ENCODE measurements at regions of chr15 and their contacts with region 1.

Region 1: DNA sequence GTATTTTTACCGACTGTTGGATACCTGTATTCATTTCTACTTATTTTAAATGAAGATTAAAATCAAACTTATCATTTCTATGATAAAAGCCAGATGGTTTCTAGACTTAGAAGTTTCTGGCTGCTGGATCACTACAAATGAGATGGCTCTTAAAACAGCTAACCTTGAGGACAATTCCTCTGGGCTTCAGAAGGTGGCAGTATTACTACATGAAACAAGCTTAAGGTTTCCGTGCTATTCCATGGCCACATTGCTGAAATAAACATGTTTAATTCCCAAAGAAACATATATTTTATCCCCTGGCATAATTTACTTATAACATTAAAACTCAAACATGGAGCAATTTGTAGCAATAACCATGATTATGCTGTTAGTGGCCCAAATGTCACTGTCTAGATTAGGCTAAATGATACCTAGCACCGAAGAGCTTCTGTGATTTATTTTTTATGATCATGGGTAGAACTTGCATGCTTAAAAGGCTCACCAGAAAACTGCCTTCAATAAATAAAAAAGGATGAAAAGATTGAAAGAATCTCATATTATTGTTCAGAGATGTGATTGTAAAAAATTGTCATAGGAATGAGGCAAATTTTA is 204.0 kb upstream of the NANOGP8 start:
- DNase-seq: peak; percentile 71
- H3K4me3 ChIP-seq: no peak overlapping the region
- H3K27ac ChIP-seq: no peak overlapping the region
- H3K4me1 ChIP-seq: peaks cover 12% of the 10 kb centered on the region
- H3K27me3 ChIP-seq: peaks cover 18 to 51% of the 10 kb centered on the region in 2 experiments
- CTCF ChIP-seq: peak; percentile 59 to 63
- POLR2A ChIP-seq: no peak

Region 2: GRCh38 chr15:33808720-33809457 is 1480.2 kb before region 1 on chr15:
- CTCF ChIA-PET with region 1: no interaction called
- POLR2A ChIA-PET with region 1: no interaction called
- dilution Hi-C with region 1: no loop called
- intact Hi-C with region 1: no loop called
- DNase-seq: no peak
- H3K4me3 ChIP-seq: no peak overlapping the region
- H3K27ac ChIP-seq: no peak overlapping the region
- H3K4me1 ChIP-seq: no peaks in the 10 kb centered on the region
- H3K27me3 ChIP-seq: no peaks in the 10 kb centered on the region
- CTCF ChIP-seq: no peak
- POLR2A ChIP-seq: no peak

Region 3: GRCh38 chr15:35141743-35142471 is 147.2 kb before region 1 on chr15:
- CTCF ChIA-PET with region 1: no interaction called
- POLR2A ChIA-PET with region 1: no interaction called
- dilution Hi-C with region 1: no loop called
- intact Hi-C with region 1: no loop called
- DNase-seq: no peak
- H3K4me3 ChIP-seq: no peak overlapping the region
- H3K27ac ChIP-seq: no peak overlapping the region
- H3K4me1 ChIP-seq: no peaks in the 10 kb centered on the region
- H3K27me3 ChIP-seq: peaks cover 0 to 2% of the 10 kb centered on the region in 2 experiments
- CTCF ChIP-seq: no peak
- POLR2A ChIP-seq: no peak

Region 4: DNA sequence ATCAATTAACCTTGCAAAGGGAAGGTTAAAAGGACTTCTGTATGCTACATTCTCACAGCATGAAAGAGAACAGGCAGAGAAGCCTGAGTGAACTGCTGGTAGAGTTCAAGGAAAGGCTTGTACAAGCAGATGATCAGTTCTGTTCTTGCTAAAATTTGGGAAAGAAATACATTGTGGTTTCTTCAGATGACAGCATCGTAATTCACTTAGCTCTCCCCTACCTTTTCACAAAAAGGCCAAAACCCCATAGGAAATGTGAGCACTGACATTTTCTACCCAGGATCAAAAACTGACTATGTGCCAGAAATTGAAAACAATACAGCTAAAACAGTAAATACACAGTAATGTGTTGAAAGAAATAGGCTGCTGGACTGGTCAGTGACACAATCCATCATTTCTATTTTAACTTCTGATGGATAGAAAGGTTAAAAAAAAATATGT is 40.4 kb after region 1 on chr15:
- CTCF ChIA-PET with region 1: interaction called, 10 read pairs
- POLR2A ChIA-PET with region 1: no interaction called
- dilution Hi-C with region 1: no loop called
- intact Hi-C with region 1: no loop called
- DNase-seq: peak; percentile 69
- H3K4me3 ChIP-seq: no peak overlapping the region
- H3K27ac ChIP-seq: no peak overlapping the region
- H3K4me1 ChIP-seq: peaks cover 11% of the 10 kb centered on the region
- H3K27me3 ChIP-seq: no peaks in the 10 kb centered on the region
- CTCF ChIP-seq: no peak
- POLR2A ChIP-seq: no peak

Region 5: DNA sequence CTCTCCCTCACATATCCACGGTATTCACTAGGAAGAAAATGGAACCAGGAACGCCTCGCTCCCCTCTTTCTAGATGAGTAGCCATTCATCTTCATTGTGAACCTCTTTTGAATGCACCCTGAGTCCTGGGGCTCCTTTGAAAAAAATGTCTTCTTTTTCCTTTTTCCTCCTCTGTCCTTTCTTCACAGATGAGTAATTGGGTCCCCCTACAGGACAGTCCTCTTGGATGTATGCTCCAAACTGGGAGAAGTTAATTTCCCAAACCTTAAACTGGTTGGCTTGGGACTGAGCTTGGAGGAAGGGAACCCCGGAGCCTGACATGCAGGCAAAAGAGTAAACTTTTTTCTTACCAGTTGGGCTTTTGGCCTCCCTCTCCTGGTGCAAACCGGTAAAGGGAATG is 148.0 kb after region 1 on chr15:
- CTCF ChIA-PET with region 1: interaction called, 828 read pairs
- POLR2A ChIA-PET with region 1: no interaction called
- dilution Hi-C with region 1: no loop called
- intact Hi-C with region 1: loop called (anchors 1 kb)
- DNase-seq: peak; percentile 16
- H3K4me3 ChIP-seq: no peak overlapping the region
- H3K27ac ChIP-seq: no peak overlapping the region
- H3K4me1 ChIP-seq: no peaks in the 10 kb centered on the region
- H3K27me3 ChIP-seq: no peaks in the 10 kb centered on the region
- CTCF ChIP-seq: peak in 1 of 2 donors; percentile 13
- POLR2A ChIP-seq: no peak

Region 6: DNA sequence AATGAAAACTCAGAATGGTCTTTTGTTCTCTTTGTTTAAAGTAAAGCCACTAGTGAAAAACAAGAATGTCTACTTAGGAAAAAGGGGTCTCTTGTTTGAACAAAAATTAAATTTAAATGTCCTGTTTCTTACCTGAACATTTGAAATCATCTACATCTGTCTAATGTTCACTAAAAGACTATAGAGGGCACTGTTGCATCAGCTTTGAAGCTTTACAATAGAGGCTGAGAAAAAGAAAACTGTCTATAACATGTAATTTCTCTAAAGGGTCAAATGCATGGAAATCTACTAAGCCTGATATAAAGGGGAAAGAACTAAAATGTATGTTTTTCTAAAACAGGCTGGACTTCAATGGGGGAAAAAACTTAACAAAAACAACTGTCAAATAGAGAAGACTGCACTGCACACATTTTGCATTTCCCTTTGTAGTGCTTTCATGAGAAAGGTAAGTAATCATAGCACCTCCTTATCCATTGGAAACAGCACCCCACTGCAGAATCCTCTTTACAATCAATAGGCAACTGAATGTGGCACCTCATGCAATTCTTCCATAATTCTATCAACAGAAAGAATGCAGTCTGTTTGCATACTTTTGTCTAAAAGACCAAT is 230.5 kb after region 1 on chr15:
- CTCF ChIA-PET with region 1: interaction called, 34 read pairs
- POLR2A ChIA-PET with region 1: no interaction called
- dilution Hi-C with region 1: no loop called
- intact Hi-C with region 1: loop called (anchors 2 kb)
- DNase-seq: peak; percentile 77
- H3K4me3 ChIP-seq: no peak overlapping the region
- H3K27ac ChIP-seq: no peak overlapping the region
- H3K4me1 ChIP-seq: peaks cover 18% of the 10 kb centered on the region
- H3K27me3 ChIP-seq: no peaks in the 10 kb centered on the region
- CTCF ChIP-seq: peak; percentile 38 to 39
- POLR2A ChIP-seq: no peak

Region 7: GRCh38 chr15:36004891-36005490 is 715.9 kb after region 1 on chr15:
- CTCF ChIA-PET with region 1: interaction called, 6 read pairs
- POLR2A ChIA-PET with region 1: no interaction called
- dilution Hi-C with region 1: no loop called
- intact Hi-C with region 1: loop called (anchors 5 kb)
- DNase-seq: peak; percentile 87
- H3K4me3 ChIP-seq: peak overlapping the region in 1 of 3 experiments; percentile 33
- H3K27ac ChIP-seq: peak overlapping the region; percentile 91
- H3K4me1 ChIP-seq: peaks cover 29% of the 10 kb centered on the region
- H3K27me3 ChIP-seq: no peaks in the 10 kb centered on the region
- CTCF ChIP-seq: no peak
- POLR2A ChIP-seq: no peak

Region 8: DNA sequence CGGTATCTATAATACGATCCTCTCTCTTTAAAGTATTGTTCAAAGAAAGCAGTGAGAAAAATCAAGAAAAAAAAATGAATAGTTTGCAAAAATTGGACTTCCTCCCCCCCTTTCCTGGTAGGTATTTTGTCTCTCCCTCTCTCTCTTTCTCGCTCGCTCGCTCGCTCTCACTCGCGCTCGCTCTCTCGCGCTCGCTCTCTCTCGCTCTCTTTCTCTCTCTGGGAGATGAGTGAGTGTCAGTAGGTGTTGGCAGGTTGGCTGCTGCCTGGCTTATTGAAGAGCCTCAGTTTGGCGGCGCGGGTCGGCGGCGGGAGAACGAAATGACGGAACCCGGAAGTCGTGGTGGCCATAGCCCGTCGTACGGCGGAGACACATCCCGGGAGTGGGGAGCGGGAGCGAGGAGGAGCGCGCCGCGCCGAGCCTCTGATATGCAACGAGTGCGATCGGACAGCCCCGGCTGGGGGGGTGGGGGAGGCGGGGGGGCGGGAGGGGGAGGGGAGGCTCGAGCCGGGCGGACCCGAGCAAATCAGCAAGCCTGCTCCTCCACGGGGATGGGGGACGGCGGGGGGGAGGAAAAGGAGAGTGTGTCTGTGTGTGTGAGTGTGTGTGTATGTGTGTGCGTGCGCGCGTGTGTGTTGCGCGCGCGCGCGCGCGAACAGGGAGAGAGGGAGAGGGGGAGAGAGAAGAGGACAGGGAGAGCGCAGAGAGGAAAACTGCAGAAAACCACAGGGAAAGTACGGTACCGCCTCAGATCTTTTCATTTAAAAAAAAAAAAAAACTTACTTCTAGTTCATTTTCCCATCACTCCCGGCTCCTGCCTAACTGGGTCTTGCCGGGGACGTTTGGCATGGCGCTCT is 1811.2 kb after region 1 on chr15 and contains the start of gene MEIS2:
- CTCF ChIA-PET with region 1: interaction called, 3 read pairs
- POLR2A ChIA-PET with region 1: no interaction called
- dilution Hi-C with region 1: no loop called
- intact Hi-C with region 1: loop called (anchors 1 kb)
- DNase-seq: peak; percentile 87
- H3K4me3 ChIP-seq: peak within 1 kb of the TSS; percentile 89 to 95 (median 92)
- H3K27ac ChIP-seq: peak within 1 kb of the TSS; percentile 83
- H3K4me1 ChIP-seq: peaks cover 22% of the 10 kb centered on the region
- H3K27me3 ChIP-seq: peaks cover 12 to 30% of the 10 kb centered on the region in 2 experiments
- CTCF ChIP-seq: no peak
- POLR2A ChIP-seq: no peak
- total RNA-seq, gene MEIS2: 22.5 and 27.1 TPM in 2 replicates